Dorsolateral prefrontal cortex (tissue), 120 donors: ENCODE measurements at regions of chr2 and their contacts with region 1.

Region 1: GRCh38 chr2:86035883-86036668 is 69.6 kb downstream of the POLR1A start:
- DNase-seq: peak in 9 of 10 donors; percentile 51 to 80 (median 65)
- H3K4me3 ChIP-seq: peak overlapping the region in 9 of 59 donors; percentile 6 to 32 (median 13)
- H3K27ac ChIP-seq: peak overlapping the region; percentile 76 to 99 (median 95)
- H3K27me3 ChIP-seq: no peaks in the 10 kb centered on the region
- CTCF ChIP-seq: peak in 39 of 56 donors; percentile 10 to 64 (median 38)

Region 2: GRCh38 chr2:85911814-85912692 is 124.0 kb before region 1 on chr2:
- intact Hi-C with region 1: no loop called
- DNase-seq: no peak
- H3K4me3 ChIP-seq: no peak overlapping the region
- H3K27ac ChIP-seq: peak overlapping the region; percentile 14 to 100 (median 77)
- H3K27me3 ChIP-seq: no peaks in the 10 kb centered on the region
- CTCF ChIP-seq: no peak

Region 3: GRCh38 chr2:85924522-85924921 is 111.6 kb before region 1 on chr2:
- intact Hi-C with region 1: loop called (anchors 5 to 10 kb)
- DNase-seq: peak in 2 of 10 donors; percentile 34 to 42
- H3K4me3 ChIP-seq: peak overlapping the region in 1 of 59 donors; percentile 14
- H3K27ac ChIP-seq: peak overlapping the region; percentile 71 to 99 (median 95)
- H3K27me3 ChIP-seq: no peaks in the 10 kb centered on the region
- CTCF ChIP-seq: peak in 2 of 56 donors; percentile 17 to 18

Region 4: DNA sequence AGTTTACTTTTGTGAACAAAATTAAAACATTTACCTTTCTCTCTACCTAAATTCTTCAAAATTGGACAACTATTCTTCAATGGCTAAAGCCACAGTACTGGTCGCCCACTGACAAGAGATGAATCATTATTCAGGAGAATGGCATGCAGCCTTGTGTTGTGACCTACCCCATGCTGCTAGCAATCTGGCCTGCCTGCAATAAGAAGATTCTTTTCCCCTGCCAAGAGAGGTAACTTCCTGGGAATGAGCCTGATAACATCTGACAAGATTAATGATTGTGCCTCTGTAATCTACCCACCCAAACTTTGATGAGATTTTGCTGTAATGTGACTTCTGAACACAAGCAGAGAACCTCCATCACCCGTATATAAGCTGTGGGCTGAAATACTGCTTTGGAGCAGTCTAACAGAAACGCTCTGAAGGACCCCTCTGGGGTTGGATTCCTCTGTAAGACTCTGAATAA is 100.3 kb before region 1 on chr2:
- intact Hi-C with region 1: no loop called
- DNase-seq: peak in 1 of 10 donors; percentile 60
- H3K4me3 ChIP-seq: no peak overlapping the region
- H3K27ac ChIP-seq: peak overlapping the region in 6 of 59 donors; percentile 4 to 49 (median 19)
- H3K27me3 ChIP-seq: no peaks in the 10 kb centered on the region
- CTCF ChIP-seq: no peak

Region 5: DNA sequence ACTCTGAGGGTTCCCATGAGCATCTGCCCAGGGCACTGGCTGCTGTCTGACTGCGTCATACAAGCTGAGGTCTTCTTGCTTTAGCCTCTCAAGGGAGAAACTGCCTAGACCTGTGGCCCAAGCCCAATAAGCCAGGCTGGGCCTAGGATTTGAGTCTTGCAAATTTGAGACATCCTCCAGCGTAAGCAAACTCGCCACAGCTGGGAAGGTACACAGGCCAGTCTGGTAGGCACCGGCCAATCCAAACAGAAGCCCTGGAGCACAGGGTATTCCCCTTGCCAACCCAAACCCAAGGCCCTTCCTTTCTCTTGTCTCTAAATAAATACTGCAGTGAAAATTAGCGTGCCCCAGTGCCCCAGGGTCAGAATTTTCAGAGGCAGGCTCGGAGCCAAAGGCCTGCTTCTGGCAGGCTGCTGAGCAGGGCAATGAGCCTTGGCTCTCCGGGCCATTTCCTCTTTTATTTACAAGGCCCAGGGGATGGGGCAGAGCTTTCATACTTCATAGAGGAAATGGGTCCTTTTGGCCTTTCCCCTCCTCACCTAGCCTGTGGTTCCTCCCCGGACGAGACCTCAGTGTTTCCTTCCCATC is 36.3 kb after region 1 on chr2:
- intact Hi-C with region 1: loop called (anchors 5 kb)
- DNase-seq: peak in 4 of 10 donors; percentile 35 to 65 (median 46)
- H3K4me3 ChIP-seq: no peak overlapping the region
- H3K27ac ChIP-seq: peak overlapping the region; percentile 8 to 84 (median 68)
- H3K27me3 ChIP-seq: no peaks in the 10 kb centered on the region
- CTCF ChIP-seq: no peak